Calu3 (cell line): ENCODE measurements at regions of chr4 and their contacts with region 1.

Region 1: DNA sequence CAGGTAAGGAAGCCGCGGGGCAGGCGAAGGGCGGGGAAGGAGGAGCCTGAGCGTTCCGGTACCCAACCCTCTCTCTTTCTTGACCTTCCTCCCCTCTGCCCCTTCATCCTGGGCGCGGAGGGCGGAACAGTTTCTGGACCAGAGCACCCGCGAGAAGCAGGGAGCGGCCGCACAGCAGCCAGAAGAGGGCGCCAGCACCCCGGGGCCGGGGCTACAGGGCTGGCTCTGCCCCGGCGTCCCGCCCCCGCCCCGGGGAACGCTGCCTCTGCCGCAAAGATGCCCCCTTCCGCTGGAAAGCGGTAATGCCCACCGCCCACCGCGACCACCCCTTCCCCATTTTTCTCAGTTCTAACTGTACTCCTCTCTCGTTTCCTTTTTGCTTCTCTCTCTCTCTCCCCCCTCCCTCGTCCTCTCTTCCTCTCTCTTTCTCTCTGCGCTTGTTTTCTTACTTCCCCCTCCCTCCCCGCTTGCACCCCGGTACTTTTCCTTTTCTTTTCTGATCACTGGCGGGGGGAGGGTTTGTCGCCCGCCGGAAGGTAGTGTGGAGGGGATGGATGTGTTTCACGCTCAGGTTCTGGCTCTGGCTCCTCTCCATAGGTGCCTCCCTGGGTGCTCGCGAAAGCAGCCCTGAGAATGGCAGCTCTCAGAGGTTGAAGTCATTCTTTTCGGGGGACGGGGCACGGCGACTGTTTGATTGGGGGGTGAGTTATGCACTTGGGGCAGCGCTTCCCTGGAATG is 13.1 kb upstream of the PRDM8 start:
- DNase-seq: peak; percentile 92
- H3K4me3 Mint-ChIP-seq: peak overlapping the region; percentile 90
- H3K27ac Mint-ChIP-seq: peak overlapping the region; percentile 69
- H3K4me1 Mint-ChIP-seq: peaks cover 23% of the 10 kb centered on the region
- H3K27me3 Mint-ChIP-seq: peaks cover 13% of the 10 kb centered on the region
- CTCF ChIP-seq: peak; percentile 84

Region 2: GRCh38 chr4:79022529-79022928 is 1161.7 kb before region 1 on chr4:
- CTCF ChIA-PET with region 1: no interaction called
- intact Hi-C with region 1: loop called (anchors 5 kb)
- DNase-seq: no peak
- H3K4me3 Mint-ChIP-seq: no peak overlapping the region
- H3K27ac Mint-ChIP-seq: no peak overlapping the region
- H3K4me1 Mint-ChIP-seq: peaks cover 5% of the 10 kb centered on the region
- H3K27me3 Mint-ChIP-seq: no peaks in the 10 kb centered on the region
- CTCF ChIP-seq: no peak

Region 3: GRCh38 chr4:79893456-79893855 is 290.8 kb before region 1 on chr4:
- CTCF ChIA-PET with region 1: no interaction called
- intact Hi-C with region 1: no loop called
- DNase-seq: no peak
- H3K4me3 Mint-ChIP-seq: no peak overlapping the region
- H3K27ac Mint-ChIP-seq: no peak overlapping the region
- H3K4me1 Mint-ChIP-seq: no peaks in the 10 kb centered on the region
- H3K27me3 Mint-ChIP-seq: no peaks in the 10 kb centered on the region
- CTCF ChIP-seq: no peak

Region 4: DNA sequence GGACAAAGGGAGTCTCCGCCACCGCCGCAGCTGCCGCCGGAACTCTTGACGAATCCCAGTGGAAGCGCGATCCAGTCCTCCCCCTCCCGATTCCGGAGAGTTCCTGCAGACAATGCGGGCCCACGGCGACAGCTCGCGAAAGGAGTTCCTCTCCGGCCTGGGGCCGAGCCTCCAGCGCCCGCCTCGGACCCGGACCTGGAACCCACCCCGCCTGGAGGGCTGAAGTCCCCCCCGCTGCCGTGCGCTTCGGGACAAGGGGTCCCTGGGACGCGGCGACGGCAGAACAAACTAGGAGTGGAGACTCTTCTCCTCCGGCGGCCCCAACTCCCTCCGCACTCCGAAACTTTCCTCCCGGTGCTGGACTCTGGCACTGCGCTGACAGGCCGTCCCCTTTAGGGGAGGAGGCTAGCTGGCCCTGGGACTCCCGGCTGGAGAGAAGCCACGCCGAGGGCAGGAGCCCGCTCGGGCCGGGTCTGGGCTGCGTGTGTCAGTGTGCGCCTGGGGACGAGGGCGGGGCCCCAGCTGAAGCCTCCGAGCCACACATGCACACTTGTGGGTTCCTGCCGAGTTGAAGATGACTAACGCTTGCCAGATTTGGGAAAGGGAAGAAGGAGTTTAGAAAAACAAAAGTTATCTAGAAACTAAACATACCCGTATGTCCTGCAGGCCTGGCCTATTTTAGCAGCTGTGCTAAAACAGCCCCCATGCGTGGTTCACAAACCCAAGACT is 111.3 kb before region 1 on chr4 and contains the start of gene ANTXR2:
- CTCF ChIA-PET with region 1: no interaction called
- intact Hi-C with region 1: loop called (anchors 5 kb)
- DNase-seq: peak; percentile 74
- H3K4me3 Mint-ChIP-seq: peak within 1 kb of the TSS; percentile 95
- H3K27ac Mint-ChIP-seq: peak within 1 kb of the TSS; percentile 86
- H3K4me1 Mint-ChIP-seq: peaks cover 10% of the 10 kb centered on the region
- H3K27me3 Mint-ChIP-seq: no peaks in the 10 kb centered on the region
- CTCF ChIP-seq: no peak
- total RNA-seq, gene ANTXR2: 21.6 and 23.6 TPM in 2 replicates

Region 5: DNA sequence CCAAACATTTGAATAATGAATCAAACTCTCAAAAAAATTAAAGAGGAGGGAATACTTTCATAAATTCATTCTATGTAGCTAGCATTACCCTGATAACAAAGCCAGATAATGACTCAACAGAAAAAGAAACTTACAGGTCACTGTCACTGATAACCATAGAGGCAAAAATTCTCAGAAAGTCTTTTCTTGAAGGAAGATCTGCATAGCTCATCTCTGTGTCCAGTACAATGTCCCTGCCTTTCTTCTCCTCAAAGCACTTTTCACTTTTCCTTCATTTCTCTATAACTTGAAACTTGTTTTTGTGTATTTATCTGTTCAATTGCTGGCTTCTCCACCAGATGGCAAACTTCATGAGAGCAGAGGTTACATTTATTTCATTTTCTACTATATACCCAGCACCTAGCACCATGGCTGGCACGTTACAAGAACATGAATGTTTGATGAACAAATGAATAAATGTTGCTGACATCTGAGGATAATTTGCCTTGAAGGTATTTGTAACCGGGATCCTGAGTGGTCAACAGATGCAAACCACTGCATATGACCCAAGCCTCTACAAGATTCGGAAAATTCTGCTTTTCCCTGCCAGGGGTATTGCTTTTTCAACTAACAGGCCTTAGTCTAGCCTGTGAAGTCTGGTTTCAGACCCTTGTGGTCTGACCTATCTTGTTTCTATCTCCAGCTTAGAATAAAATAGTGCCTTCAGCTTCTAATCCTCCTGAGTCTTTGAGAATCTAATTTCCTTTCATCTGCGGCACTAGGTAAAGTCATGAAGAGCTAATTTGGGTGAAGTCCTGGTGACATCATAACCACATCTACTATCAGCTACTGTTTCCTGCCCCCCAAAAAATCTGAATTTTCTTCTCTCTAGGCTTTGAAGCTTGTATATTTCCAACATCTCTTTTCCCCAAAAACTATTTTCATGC is 58.7 kb before region 1 on chr4:
- CTCF ChIA-PET with region 1: interaction called, 3 read pairs
- intact Hi-C with region 1: loop called (anchors 1 kb)
- DNase-seq: peak; percentile 11
- H3K4me3 Mint-ChIP-seq: no peak overlapping the region
- H3K27ac Mint-ChIP-seq: no peak overlapping the region
- H3K4me1 Mint-ChIP-seq: peaks cover 22% of the 10 kb centered on the region
- H3K27me3 Mint-ChIP-seq: no peaks in the 10 kb centered on the region
- CTCF ChIP-seq: peak; percentile 38